ENCODE measurements at regions of chr18 and their contacts with region 1.

Region 1: GRCh38 chr18:623761-624620 is 27.2 kb downstream of the CLUL1 start:
- DNase-seq: peak; percentile 48 to 72
- H3K4me3 ChIP-seq: no peak overlapping the region
- H3K27ac ChIP-seq: no peak overlapping the region
- H3K4me1 ChIP-seq: no peaks in the 10 kb centered on the region
- H3K27me3 ChIP-seq: peaks cover 40% of the 10 kb centered on the region; the same call in 1 of the 2 replicates
- CTCF ChIP-seq: peak; percentile 72

Region 2: DNA sequence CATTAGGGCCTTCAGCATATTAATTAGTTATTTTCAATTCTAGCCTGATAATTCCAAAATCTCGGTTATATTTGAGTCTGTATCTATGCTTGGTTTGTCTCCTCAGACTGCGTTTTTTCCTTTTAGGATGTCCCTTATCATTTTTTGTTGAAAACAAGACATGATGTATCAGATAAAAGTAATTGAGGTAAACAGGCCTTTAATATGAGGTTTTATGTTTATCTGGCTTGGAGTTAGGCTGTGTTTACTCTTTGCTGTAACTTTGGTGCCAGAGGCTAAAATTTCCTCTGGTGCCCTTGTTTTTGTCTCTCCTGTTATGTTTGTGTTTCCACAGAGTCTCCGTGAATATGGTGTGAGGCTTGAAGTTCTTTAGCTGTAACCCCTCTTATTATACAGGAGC is 34.8 kb before region 1 on chr18:
- CTCF ChIA-PET with region 1: no interaction called
- POLR2A ChIA-PET with region 1: no interaction called
- intact Hi-C with region 1: no loop called
- DNase-seq: no peak
- H3K4me3 ChIP-seq: no peak overlapping the region
- H3K27ac ChIP-seq: no peak overlapping the region
- H3K4me1 ChIP-seq: no peaks in the 10 kb centered on the region
- H3K27me3 ChIP-seq: peaks cover 56% of the 10 kb centered on the region
- CTCF ChIP-seq: no peak

Region 3: DNA sequence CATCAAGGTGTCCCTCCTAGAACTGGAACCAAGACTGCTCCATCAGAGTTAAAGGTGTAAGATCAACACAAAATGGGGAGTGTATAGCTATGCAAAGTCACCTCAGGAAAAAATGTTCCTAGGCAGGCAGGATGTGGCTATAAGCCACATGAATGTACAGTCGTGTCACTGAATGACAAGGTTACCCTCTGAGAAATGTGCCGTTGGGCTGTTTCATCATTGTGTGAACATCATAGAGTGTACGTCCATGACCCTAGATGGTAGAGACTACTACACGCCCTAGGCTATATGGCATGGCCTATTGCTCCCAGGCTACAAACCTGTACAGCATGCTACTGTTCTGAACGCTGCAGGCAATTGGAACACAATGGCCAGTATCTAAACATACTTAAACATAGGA is 58.0 kb after region 1 on chr18:
- CTCF ChIA-PET with region 1: no interaction called
- POLR2A ChIA-PET with region 1: no interaction called
- intact Hi-C with region 1: no loop called
- DNase-seq: no peak
- H3K4me3 ChIP-seq: no peak overlapping the region
- H3K27ac ChIP-seq: no peak overlapping the region
- H3K4me1 ChIP-seq: no peaks in the 10 kb centered on the region
- H3K27me3 ChIP-seq: no peaks in the 10 kb centered on the region
- CTCF ChIP-seq: no peak

Region 4: DNA sequence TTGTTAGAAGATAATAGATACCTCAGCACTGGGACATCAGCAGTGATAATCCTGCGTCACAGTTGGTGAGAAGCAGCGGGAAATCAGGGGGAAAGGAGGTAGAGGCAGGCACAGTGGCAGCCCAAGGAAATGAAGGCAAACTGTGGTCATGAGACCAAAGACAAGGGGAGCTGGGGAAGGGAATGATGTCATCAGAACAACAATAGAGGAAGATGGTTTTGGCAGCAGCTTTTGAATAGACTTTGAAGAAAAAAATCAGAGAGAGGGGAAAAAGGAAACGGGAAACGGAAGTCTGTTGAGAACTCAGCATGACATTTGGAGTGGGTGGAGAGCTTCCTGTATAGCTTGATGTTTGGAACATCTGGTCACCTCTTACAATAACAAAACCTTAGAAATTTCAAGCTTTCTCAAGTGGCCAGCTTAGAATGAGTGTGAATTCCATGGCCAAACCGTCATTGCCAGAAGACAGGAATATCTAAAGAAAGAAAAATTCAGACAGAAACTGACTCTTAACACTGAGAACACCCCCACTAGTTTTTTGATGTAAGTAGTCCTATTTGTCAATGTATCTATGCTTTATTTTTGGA is 206.4 kb after region 1 on chr18:
- CTCF ChIA-PET with region 1: interaction called, 28 read pairs
- POLR2A ChIA-PET with region 1: no interaction called
- intact Hi-C with region 1: loop called (anchors 1 kb)
- DNase-seq: no peak
- H3K4me3 ChIP-seq: no peak overlapping the region
- H3K27ac ChIP-seq: no peak overlapping the region
- H3K4me1 ChIP-seq: no peaks in the 10 kb centered on the region
- H3K27me3 ChIP-seq: no peaks in the 10 kb centered on the region
- CTCF ChIP-seq: no peak

Region 5: GRCh38 chr18:839224-840022 is 215.4 kb after region 1 on chr18:
- CTCF ChIA-PET with region 1: interaction called, 28 read pairs
- POLR2A ChIA-PET with region 1: no interaction called
- intact Hi-C with region 1: loop called (anchors 2 kb)
- DNase-seq: peak; percentile 49 to 76
- H3K4me3 ChIP-seq: no peak overlapping the region
- H3K27ac ChIP-seq: no peak overlapping the region
- H3K4me1 ChIP-seq: no peaks in the 10 kb centered on the region
- H3K27me3 ChIP-seq: no peaks in the 10 kb centered on the region
- CTCF ChIP-seq: peak; percentile 93

Region 6: DNA sequence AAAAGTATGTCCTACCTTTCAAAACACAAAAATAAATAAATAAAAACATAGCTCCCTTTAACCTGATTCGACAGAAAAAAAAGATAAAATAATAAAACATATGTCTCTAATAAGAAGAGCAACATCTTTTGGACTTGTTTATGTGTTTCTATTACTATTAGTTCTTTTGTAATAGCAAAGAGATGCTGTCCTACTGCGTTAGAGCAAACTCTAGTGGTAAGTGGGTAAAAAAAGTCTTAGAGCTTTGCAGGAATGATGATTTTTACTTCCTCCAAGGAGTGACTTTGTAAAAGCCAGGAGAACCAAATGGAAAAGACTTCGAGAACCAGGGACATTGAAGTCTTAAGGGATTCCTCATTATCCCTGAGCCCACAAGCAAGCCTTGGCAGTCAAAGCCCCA is 1497.2 kb after region 1 on chr18:
- CTCF ChIA-PET with region 1: interaction called, 11 read pairs
- POLR2A ChIA-PET with region 1: no interaction called
- intact Hi-C with region 1: no loop called
- DNase-seq: no peak
- H3K4me3 ChIP-seq: no peak overlapping the region
- H3K27ac ChIP-seq: no peak overlapping the region
- H3K4me1 ChIP-seq: no peaks in the 10 kb centered on the region
- H3K27me3 ChIP-seq: no peaks in the 10 kb centered on the region
- CTCF ChIP-seq: no peak

Measured in PC-9 (cell line).